PC-9 (cell line): ENCODE measurements at regions of chr1 and their contacts with region 1.

Region 1: DNA sequence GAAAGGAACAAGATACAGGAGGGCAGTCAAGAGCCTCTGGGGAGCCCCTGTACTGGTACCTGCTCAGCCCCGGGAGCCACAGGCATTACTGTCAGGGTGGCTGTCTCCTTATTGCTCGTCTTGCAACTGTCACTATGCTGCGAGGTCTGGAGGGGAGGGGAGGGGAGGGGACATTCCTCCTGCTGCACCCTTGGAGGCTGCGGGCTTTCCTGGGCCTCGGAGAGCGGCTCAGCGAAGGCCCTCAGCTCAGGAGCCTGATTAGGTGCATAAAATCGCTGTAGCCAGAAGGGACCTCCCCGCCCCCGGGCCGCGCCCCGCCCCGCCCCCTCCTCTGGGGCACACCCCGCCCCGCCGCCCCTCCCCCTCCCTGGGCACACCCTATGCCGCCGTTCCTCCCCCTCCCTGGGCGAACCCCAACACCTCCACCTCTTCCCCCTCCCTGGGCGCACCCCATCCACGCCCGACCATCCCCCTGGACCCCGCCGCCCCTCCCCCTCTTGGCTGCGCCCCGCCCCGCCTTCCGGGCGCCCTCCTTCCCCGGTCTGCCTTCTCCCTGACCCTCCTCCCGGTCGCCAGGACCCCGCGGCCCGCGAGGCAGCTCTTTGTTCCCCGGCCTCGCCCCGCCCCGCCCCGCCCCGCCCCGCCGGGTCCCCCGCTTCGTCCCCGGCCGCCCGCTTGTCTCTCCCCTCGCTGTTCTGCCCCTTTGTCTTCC is 35.5 kb downstream of the CACHD1 start:
- DNase-seq: peak in 1 of 2 experiments; percentile 58
- H3K4me3 ChIP-seq: peak overlapping the region; percentile 58
- H3K27ac ChIP-seq: no peak overlapping the region
- H3K4me1 ChIP-seq: peaks cover 14% of the 10 kb centered on the region
- H3K27me3 ChIP-seq: no peaks in the 10 kb centered on the region
- CTCF ChIP-seq: no peak

Region 2: GRCh38 chr1:64469977-64470664 is 35.3 kb before region 1 on chr1 and contains the start of gene CACHD1:
- CTCF ChIA-PET with region 1: no interaction called
- POLR2A ChIA-PET with region 1: no interaction called
- intact Hi-C with region 1: loop called (anchors 2 kb)
- DNase-seq: peak in 1 of 2 experiments; percentile 73
- H3K4me3 ChIP-seq: peak within 1 kb of the TSS; percentile 86
- H3K27ac ChIP-seq: no peak within 1 kb of the TSS
- H3K4me1 ChIP-seq: peaks cover 18% of the 10 kb centered on the region
- H3K27me3 ChIP-seq: no peaks in the 10 kb centered on the region; the same call in 1 of the 2 replicates
- CTCF ChIP-seq: no peak
- total RNA-seq, gene CACHD1: 3.1 and 3.8 TPM in 2 replicates

Region 3: DNA sequence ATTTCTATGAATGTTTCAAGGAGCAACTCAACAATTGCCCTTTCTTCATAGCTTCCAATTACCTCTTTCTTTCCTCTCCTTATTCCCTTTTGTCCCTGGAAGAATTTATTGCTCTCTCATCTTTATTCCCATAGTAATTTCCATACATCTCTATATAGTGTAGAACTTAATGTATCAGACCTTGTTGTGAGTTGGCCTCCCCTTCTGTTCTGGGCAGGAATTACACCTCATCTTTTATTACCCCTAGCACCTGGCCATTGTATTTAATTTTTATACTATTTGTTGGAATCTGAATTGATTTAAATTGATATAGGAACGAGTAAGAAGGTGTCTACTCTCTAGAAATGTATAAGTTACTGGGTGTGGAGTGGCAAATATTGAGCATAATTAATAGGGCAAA is 79.1 kb after region 1 on chr1:
- CTCF ChIA-PET with region 1: no interaction called
- POLR2A ChIA-PET with region 1: no interaction called
- intact Hi-C with region 1: loop called (anchors 5 kb)
- DNase-seq: no peak
- H3K4me3 ChIP-seq: no peak overlapping the region
- H3K27ac ChIP-seq: no peak overlapping the region
- H3K4me1 ChIP-seq: no peaks in the 10 kb centered on the region
- H3K27me3 ChIP-seq: no peaks in the 10 kb centered on the region
- CTCF ChIP-seq: peak; percentile 39; the same call in 1 of the 2 replicates

Region 4: DNA sequence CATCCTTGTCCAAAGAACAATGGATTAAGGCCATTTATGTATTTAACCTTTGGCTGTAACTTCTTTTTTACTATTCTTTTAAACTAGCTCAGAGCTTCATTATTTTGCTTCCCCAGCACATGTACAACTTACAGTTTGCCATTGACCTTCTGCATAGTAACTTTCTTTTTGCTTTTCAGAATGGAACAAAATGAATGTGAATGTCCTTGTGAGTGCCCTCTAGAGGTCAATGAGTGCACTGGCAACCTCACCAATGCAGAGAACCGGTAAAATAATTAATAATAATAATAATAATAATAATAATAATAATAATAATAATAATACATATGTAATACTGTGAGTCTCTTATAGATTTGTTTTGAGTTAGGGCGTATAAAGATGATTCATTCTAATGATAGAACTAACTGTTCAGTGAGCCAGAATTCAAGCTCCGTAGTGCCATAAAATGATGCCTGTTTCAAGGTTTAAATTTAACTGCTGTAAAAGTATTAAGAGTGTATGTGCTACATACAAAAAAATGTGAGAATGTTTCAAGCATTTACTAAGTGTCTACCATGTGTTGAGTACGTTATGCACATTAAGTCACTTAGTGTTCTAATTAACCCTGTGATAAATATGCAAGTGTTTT is 170.4 kb after region 1 on chr1:
- CTCF ChIA-PET with region 1: no interaction called
- POLR2A ChIA-PET with region 1: no interaction called
- intact Hi-C with region 1: loop called (anchors 5 kb)
- DNase-seq: no peak
- H3K4me3 ChIP-seq: no peak overlapping the region
- H3K27ac ChIP-seq: no peak overlapping the region
- H3K4me1 ChIP-seq: no peaks in the 10 kb centered on the region
- H3K27me3 ChIP-seq: no peaks in the 10 kb centered on the region
- CTCF ChIP-seq: peak; percentile 65